Dendritic cell treated with granulocyte-macrophage colony-stimulating factor and Interleukin-4, amounts not matched to agents 40 ng/mL and 50 ng/mL, for 4 days (primary cell): ENCODE measurements at regions of chr11 and their contacts with region 1.

Region 1: GRCh38 chr11:129331871-129332274 is 43.8 kb upstream of the BARX2 start:
- H3K4me3 Mint-ChIP-seq: peak overlapping the region; percentile 55
- H3K27ac Mint-ChIP-seq: no peak overlapping the region
- H3K4me1 Mint-ChIP-seq: peaks cover 6% of the 10 kb centered on the region
- H3K27me3 Mint-ChIP-seq: no peaks in the 10 kb centered on the region

Region 2: DNA sequence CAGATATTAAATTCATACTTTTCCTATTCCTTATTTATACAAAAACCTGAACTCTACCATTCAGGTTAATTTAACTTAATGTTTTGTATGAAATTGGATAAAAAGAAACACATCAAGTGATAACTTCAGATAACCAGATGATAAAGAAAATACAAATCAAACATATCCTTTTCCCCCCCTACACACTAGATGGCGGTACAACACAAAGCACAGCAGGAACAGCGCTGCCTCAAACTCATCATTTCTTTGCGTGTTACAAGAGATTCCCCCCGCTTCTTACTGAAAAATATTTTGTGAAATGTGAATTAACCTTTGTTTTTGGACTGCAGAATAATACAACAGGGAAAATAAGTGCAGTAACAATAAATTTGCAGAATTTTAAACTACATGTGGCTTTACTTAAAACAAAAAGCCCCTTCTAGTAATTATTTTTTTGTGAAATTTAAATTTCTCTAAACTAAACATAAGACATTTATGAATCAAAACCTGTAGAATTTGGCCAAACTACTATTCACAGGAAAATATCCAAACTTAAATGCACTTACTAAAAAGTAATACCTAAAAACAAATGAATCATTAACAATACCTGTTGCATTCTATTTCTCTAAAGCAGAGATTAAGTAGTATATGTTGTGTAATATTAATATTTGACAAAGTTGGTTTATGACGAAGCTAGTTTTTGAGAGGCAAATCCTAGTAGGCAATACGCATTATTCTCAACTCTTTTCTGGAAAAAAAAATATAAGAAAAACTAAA is 214.1 kb before region 1 on chr11:
- intact Hi-C with region 1: loop called (anchors 1 kb)
- H3K4me3 Mint-ChIP-seq: no peak overlapping the region
- H3K27ac Mint-ChIP-seq: no peak overlapping the region
- H3K4me1 Mint-ChIP-seq: no peaks in the 10 kb centered on the region
- H3K27me3 Mint-ChIP-seq: no peaks in the 10 kb centered on the region

Region 3: GRCh38 chr11:129230006-129230405 is 101.9 kb before region 1 on chr11:
- intact Hi-C with region 1: loop called (anchors 1 kb)
- H3K4me3 Mint-ChIP-seq: no peak overlapping the region
- H3K27ac Mint-ChIP-seq: no peak overlapping the region
- H3K4me1 Mint-ChIP-seq: no peaks in the 10 kb centered on the region
- H3K27me3 Mint-ChIP-seq: no peaks in the 10 kb centered on the region

Region 4: GRCh38 chr11:129375751-129376657 is 44.1 kb after region 1 on chr11 and contains the start of gene BARX2:
- intact Hi-C with region 1: no loop called
- H3K4me3 Mint-ChIP-seq: no peak within 1 kb of the TSS
- H3K27ac Mint-ChIP-seq: no peak within 1 kb of the TSS
- H3K4me1 Mint-ChIP-seq: peaks cover 25% of the 10 kb centered on the region
- H3K27me3 Mint-ChIP-seq: peaks cover 77% of the 10 kb centered on the region